Heart right ventricle (tissue), 16 donors: ENCODE measurements at regions of chr5 and their contacts with region 1.

Region 1: DNA sequence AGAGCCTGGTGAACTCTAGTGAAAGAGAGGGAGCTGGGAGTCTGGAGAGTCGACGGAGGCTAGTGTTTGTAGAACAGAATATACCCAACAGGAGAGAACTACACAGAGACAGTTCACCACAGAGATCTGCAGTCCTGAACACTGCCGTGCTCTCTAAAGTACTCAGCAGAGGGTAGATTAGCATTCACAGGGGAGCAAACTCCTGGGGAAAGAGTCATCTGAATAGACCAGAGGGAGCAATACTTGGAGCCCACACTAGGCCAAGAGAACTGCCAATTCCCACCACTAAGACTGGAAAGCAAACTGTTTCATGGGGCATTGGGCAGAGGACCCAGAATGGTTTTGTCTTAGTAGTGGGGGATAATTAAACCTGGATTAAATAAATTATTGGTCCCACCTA is 235.6 kb downstream of the EDIL3 start:
- DNase-seq: no peak
- ATAC-seq: no peak
- H3K4me3 ChIP-seq: no peak overlapping the region
- H3K27ac ChIP-seq: no peak overlapping the region
- H3K4me1 ChIP-seq: no peaks in the 10 kb centered on the region
- H3K27me3 ChIP-seq: no peaks in the 10 kb centered on the region
- CTCF ChIP-seq: no peak

Region 2: GRCh38 chr5:84080908-84081307 is 68.2 kb before region 1 on chr5:
- intact Hi-C with region 1: loop called in 1 of 10 experiments (anchors 2 kb)
- DNase-seq: no peak
- ATAC-seq: no peak
- H3K4me3 ChIP-seq: no peak overlapping the region
- H3K27ac ChIP-seq: no peak overlapping the region
- H3K4me1 ChIP-seq: no peaks in the 10 kb centered on the region
- H3K27me3 ChIP-seq: no peaks in the 10 kb centered on the region
- CTCF ChIP-seq: no peak